Activated CD4-positive, alpha-beta memory T cell treated with anti-CD3 and anti-CD28 coated beads for 36 hours (primary cell): ENCODE measurements at regions of chr6 and their contacts with region 1.

Region 1: DNA sequence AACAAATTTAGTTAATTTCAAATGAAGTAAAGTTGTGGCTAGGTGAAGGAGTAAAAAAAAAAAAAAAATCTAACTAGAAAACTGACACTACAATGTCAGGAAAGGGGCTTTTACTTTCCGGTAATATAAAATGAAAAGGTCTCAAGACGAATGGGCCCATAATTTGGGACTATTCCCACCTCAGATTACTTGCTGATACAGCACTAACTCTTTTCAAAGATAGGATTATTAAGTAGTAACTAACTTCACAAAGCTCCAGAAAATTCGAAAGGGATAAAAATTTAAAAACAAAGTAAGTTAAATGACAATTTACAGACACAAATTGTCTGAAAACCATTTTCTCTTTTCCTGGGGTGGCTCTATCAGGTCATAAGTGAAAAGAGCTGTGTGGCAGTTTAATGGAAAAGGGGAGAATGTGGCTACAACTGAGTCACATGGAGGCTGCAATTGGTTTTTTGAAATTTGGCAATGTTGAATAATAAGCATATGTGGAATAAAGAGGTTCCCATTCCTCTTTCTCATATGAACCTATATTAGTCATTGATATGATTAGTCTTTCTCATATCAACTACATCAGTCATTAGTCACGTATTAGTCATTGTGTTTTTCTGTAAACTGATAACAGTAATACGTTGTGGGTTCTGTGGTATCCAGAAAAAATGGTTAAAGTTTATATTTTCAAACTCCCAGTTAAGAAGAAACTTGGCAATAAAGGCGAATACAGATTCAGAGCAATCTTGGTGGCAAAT is 78.0 kb downstream of the RWDD2A start:
- DNase-seq: no peak
- H3K4me3 Mint-ChIP-seq: no peak overlapping the region
- H3K27ac Mint-ChIP-seq: no peak overlapping the region
- H3K4me1 Mint-ChIP-seq: peaks cover 4% of the 10 kb centered on the region
- H3K27me3 Mint-ChIP-seq: peaks cover 4% of the 10 kb centered on the region

Region 2: DNA sequence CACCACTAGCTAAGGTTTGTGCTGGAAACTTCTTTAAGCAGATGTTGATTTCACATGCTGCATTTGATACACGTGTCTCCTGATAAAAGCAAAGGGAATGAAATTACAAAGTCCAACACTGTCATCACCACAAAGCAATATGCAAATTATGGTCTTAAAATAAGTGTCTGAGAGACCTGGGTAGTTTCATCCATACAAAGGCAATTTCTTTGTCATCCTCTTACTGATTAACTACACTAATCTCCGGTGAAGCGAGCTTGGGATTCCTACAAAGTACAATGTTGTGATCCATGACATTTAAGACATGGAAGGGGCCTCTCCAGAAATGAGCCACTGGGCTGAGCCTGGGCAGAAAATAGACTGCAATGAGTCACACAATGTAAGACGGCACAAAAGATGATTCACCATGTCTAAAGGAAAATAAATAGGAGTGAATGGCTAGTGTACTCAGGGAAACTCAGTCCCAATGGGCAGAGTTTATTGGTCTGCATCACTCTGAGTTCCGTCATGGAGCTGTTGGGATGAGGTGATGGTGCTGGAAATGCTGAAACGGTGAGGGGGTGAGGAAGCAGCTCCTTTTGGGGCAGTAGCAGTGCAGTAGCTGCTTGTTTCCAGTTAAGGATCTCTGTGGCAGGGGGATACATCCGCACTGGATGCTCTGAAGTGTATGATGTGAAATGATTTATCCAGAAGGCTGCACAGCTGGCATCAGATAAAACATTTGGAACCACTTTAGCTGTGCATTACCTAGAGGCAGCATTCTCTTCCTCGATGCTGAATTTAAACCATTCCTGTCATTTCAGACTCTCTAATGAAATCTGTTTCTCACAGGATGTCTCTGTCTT is 1126.9 kb before region 1 on chr6:
- CTCF ChIA-PET with region 1: no interaction called
- POLR2A ChIA-PET with region 1: no interaction called
- intact Hi-C with region 1: no loop called
- DNase-seq: no peak
- H3K4me3 Mint-ChIP-seq: no peak overlapping the region
- H3K27ac Mint-ChIP-seq: no peak overlapping the region
- H3K4me1 Mint-ChIP-seq: no peaks in the 10 kb centered on the region
- H3K27me3 Mint-ChIP-seq: no peaks in the 10 kb centered on the region

Region 3: GRCh38 chr6:83292900-83293843 is 22.0 kb after region 1 on chr6:
- CTCF ChIA-PET with region 1: no interaction called
- POLR2A ChIA-PET with region 1: interaction called, 3 read pairs
- intact Hi-C with region 1: loop called (anchors 1 kb)
- DNase-seq: no peak
- H3K4me3 Mint-ChIP-seq: no peak overlapping the region
- H3K27ac Mint-ChIP-seq: no peak overlapping the region
- H3K4me1 Mint-ChIP-seq: peaks cover 9% of the 10 kb centered on the region
- H3K27me3 Mint-ChIP-seq: peaks cover 34% of the 10 kb centered on the region